ENCODE measurements at regions of chr11 and their contacts with region 1.

Region 1: GRCh38 chr11:72080256-72080974 is at the starts of genes LRRC51 and NUMA1:
- DNase-seq: peak; percentile 99
- H3K4me3 ChIP-seq: peak within 1 kb of the TSS; percentile 60 to 88 (median 62)
- H3K27ac ChIP-seq: peak within 1 kb of the TSS; percentile 92 to 96 (median 94)
- H3K4me1 ChIP-seq: peaks cover 21 to 78% (median 33%) of the 10 kb centered on the region in 3 donors
- H3K27me3 ChIP-seq: no peaks in the 10 kb centered on the region
- CTCF ChIP-seq: peak in 1 of 6 experiments; percentile 5
- POLR2A ChIP-seq: peak in 3 of 4 donors; percentile 43 to 75 (median 67)
- total RNA-seq, gene LRRC51: 2.1 to 4.2 (median 3.2) TPM
- total RNA-seq, gene NUMA1: 142 to 237 (median 177) TPM

Region 2: DNA sequence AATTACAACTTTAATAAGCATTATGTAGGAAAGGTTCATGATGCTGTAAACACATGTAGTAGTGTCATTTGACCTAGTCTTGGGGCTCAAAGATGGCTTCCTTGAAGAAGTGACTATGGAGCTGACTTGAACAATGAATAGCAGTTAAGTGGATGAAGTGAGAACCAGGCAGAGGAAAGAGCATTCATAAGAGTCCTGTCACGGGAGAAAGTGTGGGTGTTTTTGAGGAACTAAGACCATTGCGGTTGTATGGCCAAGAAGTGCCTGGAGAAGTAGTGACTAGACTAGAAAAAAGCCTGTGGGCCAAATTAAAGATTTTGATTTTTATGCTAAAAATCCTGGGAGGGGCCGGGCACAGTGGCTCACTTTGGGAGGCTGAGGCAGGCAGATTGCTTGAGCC is 88.9 kb before region 1 on chr11:
- intact Hi-C with region 1: no loop called
- DNase-seq: no peak
- H3K4me3 ChIP-seq: no peak overlapping the region
- H3K27ac ChIP-seq: no peak overlapping the region
- H3K4me1 ChIP-seq: peaks cover 0 to 12% (median 0%) of the 10 kb centered on the region in 3 donors
- H3K27me3 ChIP-seq: no peaks in the 10 kb centered on the region
- CTCF ChIP-seq: no peak
- POLR2A ChIP-seq: no peak

Region 3: DNA sequence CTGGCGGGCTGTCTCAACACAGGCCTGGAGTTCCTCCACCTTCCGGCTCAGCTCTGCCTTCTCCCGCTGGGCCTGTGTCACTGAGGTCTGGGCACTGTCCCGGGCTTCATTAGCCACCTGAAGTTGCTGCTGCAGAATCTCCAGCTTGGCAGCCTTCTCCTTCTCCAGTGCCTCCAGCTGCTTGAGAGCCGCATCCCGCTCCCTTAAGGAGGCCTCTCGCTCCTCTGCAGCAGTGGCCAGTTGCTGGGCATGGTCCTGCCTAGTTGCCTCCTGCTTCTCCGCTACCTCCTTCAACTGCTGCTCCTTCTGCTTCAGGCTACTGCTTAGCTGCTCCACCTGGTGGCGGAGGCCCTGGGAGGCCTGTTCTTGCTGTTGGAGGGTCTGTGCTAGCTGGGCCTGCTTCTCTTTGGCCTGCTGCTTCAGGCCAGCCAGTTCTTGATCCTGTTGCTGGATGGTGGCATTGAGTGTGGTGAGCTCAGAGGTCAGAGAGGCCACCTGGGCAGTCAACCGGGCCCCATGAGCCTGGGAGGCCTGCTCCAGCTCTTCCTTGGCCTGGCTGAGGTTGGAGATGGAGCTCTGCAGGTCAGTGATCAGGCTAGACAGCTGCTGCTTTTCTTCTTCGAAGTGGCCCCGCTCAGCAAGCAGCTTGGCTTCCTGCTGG is 64.8 kb before region 1 on chr11:
- intact Hi-C with region 1: no loop called
- DNase-seq: no peak
- H3K4me3 ChIP-seq: no peak overlapping the region
- H3K27ac ChIP-seq: peak overlapping the region in 1 of 4 donors; percentile 80
- H3K4me1 ChIP-seq: peaks cover 19 to 58% (median 34%) of the 10 kb centered on the region in 3 donors
- H3K27me3 ChIP-seq: no peaks in the 10 kb centered on the region
- CTCF ChIP-seq: peak in 2 of 6 experiments; percentile 8 to 40
- POLR2A ChIP-seq: no peak

Region 4: DNA sequence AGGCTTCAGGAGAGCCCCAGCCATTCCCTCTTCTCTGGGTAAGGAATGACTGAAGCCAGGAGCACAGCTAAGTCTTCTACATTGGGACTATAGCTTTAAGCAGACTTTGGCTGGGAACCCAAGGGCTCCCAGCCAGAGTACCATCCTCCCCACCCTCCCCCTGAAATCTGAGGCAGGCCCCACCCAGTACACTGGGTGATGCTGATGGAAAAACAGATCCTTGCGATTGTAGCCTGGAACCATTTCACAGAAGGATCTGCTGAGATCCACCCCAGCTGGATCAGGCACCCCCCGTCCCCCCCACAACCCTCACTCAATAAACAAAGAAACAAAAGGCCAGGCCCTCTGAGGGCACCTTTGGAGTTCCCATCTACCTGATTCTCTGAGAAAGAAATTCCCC is 41.9 kb before region 1 on chr11:
- intact Hi-C with region 1: loop called (anchors 5 kb)
- DNase-seq: no peak
- H3K4me3 ChIP-seq: peak overlapping the region; percentile 29 to 79 (median 62)
- H3K27ac ChIP-seq: peak overlapping the region; percentile 86 to 99 (median 96)
- H3K4me1 ChIP-seq: peaks cover 43 to 96% (median 51%) of the 10 kb centered on the region in 3 donors
- H3K27me3 ChIP-seq: no peaks in the 10 kb centered on the region
- CTCF ChIP-seq: no peak
- POLR2A ChIP-seq: peak in 2 of 4 donors; percentile 44 to 48

Region 5: GRCh38 chr11:72305891-72306585 is 225.6 kb after region 1 on chr11:
- intact Hi-C with region 1: no loop called
- DNase-seq: no peak
- H3K4me3 ChIP-seq: no peak overlapping the region
- H3K27ac ChIP-seq: no peak overlapping the region
- H3K4me1 ChIP-seq: no peaks in the 10 kb centered on the region
- H3K27me3 ChIP-seq: no peaks in the 10 kb centered on the region
- CTCF ChIP-seq: no peak
- POLR2A ChIP-seq: no peak